Cardiac septum (tissue), 1 donor: ENCODE measurements at regions of chr10 and their contacts with region 1.

Region 1: GRCh38 chr10:18340496-18341051 is 200.3 kb downstream of the CACNB2 start:
- DNase-seq: no peak

Region 2: GRCh38 chr10:18463673-18464211 is 123.2 kb after region 1 on chr10:
- intact Hi-C with region 1: loop called (anchors 10 kb)
- DNase-seq: no peak

Region 3: DNA sequence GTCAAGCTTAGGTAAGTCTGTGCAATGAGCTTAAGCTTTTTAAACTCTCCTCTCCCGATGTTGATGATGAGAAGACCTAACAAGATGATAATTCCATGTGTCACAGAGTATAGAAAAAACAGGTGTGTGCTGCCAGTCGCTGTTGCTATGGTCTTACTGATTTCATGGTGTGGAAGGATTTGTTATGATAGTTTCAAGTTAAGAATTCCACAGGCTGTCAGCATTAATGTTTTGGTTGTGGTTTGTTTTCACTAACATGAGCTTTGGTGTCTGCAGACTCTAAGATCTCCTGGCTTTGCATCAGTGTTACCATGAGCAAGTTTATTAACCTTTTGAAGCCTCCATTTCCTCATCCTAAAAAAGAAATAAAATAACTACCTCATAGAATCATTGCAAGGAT is 187.1 kb after region 1 on chr10:
- intact Hi-C with region 1: no loop called
- DNase-seq: no peak